Ovary (tissue), 10 donors: ENCODE measurements at regions of chr5 and their contacts with region 1.

Region 1: DNA sequence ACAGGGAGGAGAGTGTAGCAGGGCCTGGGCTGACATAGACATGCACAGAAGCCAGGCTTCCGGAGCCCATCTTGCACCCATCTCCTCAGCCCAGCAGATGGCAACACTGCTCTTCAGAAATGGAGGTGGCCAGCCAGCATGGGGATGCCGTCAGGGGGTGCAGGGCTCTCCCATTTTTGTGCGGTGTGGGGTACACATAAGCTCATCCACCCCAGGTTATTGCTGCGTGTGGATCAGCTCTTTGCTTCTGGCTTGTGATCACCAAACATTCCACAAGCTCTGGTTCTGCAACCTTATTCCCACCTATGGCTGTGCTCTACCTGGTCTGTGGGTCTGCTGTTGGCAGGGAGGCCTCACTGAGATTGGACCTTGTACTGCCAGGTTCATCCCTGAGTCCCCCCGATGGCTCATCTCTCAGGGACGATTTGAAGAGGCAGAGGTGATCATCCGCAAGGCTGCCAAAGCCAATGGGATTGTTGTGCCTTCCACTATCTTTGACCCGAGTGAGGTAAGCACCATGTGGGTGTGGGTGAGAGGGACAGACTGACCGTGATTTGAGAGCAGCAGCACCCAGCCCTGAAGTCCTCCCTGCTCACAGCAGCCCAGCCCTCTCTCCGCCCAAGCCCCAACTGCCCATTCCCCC is 17.3 kb downstream of the SLC22A5 start:
- DNase-seq: peak; percentile 72 to 84 (median 81)
- H3K4me3 ChIP-seq: no peak overlapping the region
- H3K27ac ChIP-seq: peak overlapping the region; percentile 66 to 87
- H3K4me1 ChIP-seq: peaks cover 26% of the 10 kb centered on the region
- H3K27me3 ChIP-seq: no peaks in the 10 kb centered on the region
- CTCF ChIP-seq: peak; percentile 62 to 90 (median 85)
- EP300 ChIP-seq: no peak
- POLR2A ChIP-seq: no peak

Region 2: DNA sequence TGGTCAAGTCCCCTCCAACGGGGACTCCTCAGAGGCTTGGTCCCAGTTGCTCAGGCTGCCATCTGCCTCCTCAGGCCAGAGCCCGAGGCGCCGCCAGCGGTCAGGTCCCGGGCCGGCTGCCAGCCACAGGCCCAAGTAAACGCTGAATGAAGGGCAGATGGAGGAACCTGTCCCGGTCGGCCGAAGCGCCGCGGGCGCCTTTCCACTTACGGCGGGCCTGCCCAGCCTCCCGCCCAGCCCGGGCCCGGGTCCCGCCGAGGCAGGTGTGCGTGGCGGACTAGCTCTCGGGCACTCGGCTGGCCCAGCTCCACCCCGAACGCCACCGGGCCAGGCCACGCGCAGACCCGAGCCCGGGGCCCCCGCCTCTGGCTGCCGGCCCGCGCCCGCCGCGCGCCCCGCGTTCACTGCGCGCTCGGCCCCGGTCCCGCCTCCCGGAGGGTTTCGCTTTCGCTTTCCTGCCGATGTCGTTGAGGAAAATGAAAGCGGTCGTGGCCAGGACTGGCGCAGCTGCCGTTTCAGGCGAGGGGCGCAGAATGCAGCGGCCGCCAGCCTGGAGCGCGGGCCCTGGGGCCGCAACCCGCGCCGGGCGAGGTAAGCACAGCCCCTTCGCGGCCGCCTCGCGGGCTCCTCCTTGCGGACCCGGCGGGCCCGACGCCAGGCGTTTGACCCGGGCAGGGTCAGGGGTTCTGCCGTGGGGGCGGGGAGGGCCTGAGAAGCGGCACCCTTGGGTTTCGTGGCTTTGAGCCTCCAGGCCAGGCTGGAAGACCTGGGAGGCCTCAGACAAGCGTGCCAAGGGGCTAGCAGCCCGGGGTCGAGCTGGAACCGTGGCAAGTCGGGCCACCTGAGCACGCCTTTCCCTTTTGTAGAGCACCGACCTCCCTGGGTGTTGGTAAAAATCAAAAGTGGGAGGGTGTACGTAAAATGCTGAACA is 24.0 kb after region 1 on chr5:
- intact Hi-C with region 1: loop called in 1 of 4 experiments (anchors 2 kb)
- DNase-seq: peak; percentile 86 to 91 (median 87)
- H3K4me3 ChIP-seq: peak overlapping the region; percentile 77
- H3K27ac ChIP-seq: peak overlapping the region; percentile 98 to 99
- H3K4me1 ChIP-seq: peaks cover 13% of the 10 kb centered on the region
- H3K27me3 ChIP-seq: no peaks in the 10 kb centered on the region
- CTCF ChIP-seq: peak; percentile 34 to 59 (median 59)
- EP300 ChIP-seq: no peak
- POLR2A ChIP-seq: peak; percentile 65

Region 3: GRCh38 chr5:132495667-132496190 is 109.0 kb after region 1 on chr5:
- intact Hi-C with region 1: loop called (anchors 2 to 5 kb)
- DNase-seq: peak; percentile 87 to 94 (median 91)
- H3K4me3 ChIP-seq: peak overlapping the region; percentile 70
- H3K27ac ChIP-seq: peak overlapping the region; percentile 74 to 88
- H3K4me1 ChIP-seq: peaks cover 13% of the 10 kb centered on the region
- H3K27me3 ChIP-seq: no peaks in the 10 kb centered on the region
- CTCF ChIP-seq: no peak
- EP300 ChIP-seq: peak; percentile 15
- POLR2A ChIP-seq: peak; percentile 24

Region 4: DNA sequence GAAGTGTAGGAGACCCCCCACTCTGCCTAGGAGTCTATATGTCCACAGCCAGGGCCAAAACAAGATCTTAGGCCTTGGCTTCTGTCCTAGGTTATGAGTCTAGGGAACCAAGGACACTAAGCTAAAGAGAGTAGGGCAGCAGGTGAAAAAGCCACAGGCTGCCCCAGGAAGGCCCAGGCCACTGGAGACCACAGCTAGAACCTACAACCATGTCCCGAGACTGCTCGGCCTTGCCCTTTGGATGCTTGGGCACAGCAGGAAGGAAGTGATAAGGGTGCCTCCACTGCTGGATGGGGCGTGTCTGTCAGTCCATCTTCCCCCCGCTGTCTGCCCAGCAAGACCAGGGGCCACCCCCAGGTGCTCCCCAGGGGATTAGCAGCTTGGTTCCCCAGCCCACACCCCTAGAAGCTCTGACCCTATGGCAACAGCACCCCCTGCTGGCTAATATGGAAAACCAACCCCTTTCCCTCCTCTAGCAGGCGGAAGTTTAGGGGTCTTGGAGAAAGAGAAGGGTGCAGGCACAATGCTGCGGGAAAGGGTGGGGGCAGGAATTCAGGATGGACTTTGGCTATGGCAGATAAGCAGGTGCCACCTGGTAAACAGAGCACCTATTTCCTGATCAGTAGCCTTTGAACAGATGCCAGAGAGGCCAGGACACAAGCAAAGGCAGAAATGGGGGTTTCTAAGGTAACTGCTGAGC is 114.3 kb after region 1 on chr5:
- intact Hi-C with region 1: loop called (anchors 2 to 5 kb)
- DNase-seq: peak in 3 of 5 donors; percentile 63 to 65 (median 65)
- H3K4me3 ChIP-seq: no peak overlapping the region
- H3K27ac ChIP-seq: peak overlapping the region in 1 of 2 donors; percentile 47
- H3K4me1 ChIP-seq: peaks cover 10% of the 10 kb centered on the region
- H3K27me3 ChIP-seq: no peaks in the 10 kb centered on the region
- CTCF ChIP-seq: peak; percentile 60 to 80 (median 61)
- EP300 ChIP-seq: no peak
- POLR2A ChIP-seq: no peak

Region 5: GRCh38 chr5:132714456-132715307 is 327.9 kb after region 1 on chr5:
- intact Hi-C with region 1: loop called in 1 of 4 experiments (anchors 10 kb)
- DNase-seq: no peak
- H3K4me3 ChIP-seq: no peak overlapping the region
- H3K27ac ChIP-seq: no peak overlapping the region
- H3K4me1 ChIP-seq: peaks cover 4% of the 10 kb centered on the region
- H3K27me3 ChIP-seq: no peaks in the 10 kb centered on the region
- CTCF ChIP-seq: no peak
- EP300 ChIP-seq: no peak
- POLR2A ChIP-seq: no peak

Region 6: GRCh38 chr5:132820162-132820754 is 433.5 kb after region 1 on chr5:
- intact Hi-C with region 1: loop called in 2 of 4 experiments (anchors 10 kb)
- DNase-seq: peak; percentile 80 to 90 (median 87)
- H3K4me3 ChIP-seq: no peak overlapping the region
- H3K27ac ChIP-seq: no peak overlapping the region
- H3K4me1 ChIP-seq: peaks cover 8% of the 10 kb centered on the region
- H3K27me3 ChIP-seq: no peaks in the 10 kb centered on the region
- CTCF ChIP-seq: peak; percentile 48 to 68 (median 65)
- EP300 ChIP-seq: no peak
- POLR2A ChIP-seq: no peak